Right cardiac atrium (tissue), 5 donors: ENCODE measurements at regions of chr10 and their contacts with region 1.

Region 1: DNA sequence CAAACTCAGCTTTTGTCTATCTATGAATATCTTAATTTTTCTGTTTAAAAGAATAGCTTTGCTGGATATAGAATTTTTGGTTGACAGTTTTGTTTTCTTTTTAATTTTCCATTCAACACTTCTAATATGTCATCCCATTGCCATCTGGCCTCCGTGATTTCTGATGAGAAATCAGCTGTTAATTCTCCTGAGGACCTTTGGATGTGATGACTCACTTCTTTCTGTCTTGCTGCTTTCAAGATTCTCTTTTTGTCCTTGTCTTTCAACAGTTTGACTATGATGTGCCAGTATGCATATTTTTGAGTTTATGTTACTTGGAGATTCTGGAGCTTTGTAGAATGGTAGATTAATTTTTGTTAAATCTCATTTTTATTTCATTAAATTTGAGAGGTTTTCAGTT is 38.4 kb downstream of the ZNF518A start:
- DNase-seq: no peak
- ATAC-seq: no peak
- H3K4me3 ChIP-seq: no peak overlapping the region
- H3K27ac ChIP-seq: no peak overlapping the region
- H3K4me1 ChIP-seq: no peaks in the 10 kb centered on the region
- H3K27me3 ChIP-seq: no peaks in the 10 kb centered on the region

Region 2: DNA sequence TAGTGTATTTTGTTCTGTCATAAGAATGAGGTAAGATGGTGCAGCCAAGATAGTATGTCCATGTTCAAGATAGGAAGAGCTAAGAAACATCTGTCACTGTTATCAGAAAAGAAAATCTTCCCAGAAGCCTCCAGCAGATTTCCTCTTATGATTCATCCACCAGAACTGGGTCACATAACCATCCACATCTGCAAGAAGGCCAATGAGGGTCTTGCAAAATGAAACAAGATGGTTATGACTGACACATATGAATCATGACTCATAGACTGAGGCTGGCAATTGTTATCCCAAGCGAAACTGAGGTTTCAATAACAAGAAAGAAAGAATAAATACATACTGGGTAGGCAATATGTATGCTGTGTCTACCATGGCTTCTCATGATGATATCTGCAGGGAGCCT is 94.8 kb before region 1 on chr10:
- intact Hi-C with region 1: no loop called
- DNase-seq: no peak
- ATAC-seq: no peak
- H3K4me3 ChIP-seq: no peak overlapping the region
- H3K27ac ChIP-seq: no peak overlapping the region
- H3K4me1 ChIP-seq: peaks cover 1% of the 10 kb centered on the region
- H3K27me3 ChIP-seq: no peaks in the 10 kb centered on the region

Region 3: GRCh38 chr10:96532496-96532895 is 363.9 kb after region 1 on chr10:
- intact Hi-C with region 1: loop called in 1 of 4 experiments (anchors 10 kb)
- DNase-seq: no peak
- ATAC-seq: no peak
- H3K4me3 ChIP-seq: no peak overlapping the region
- H3K27ac ChIP-seq: no peak overlapping the region
- H3K4me1 ChIP-seq: no peaks in the 10 kb centered on the region
- H3K27me3 ChIP-seq: no peaks in the 10 kb centered on the region